ENCODE measurements at regions of chr9 and their contacts with region 1.

Region 1: GRCh38 chr9:135098400-135099105 is 11.1 kb downstream of the OLFM1 start:
- DNase-seq: no peak

Region 2: GRCh38 chr9:135178498-135178897 is 79.9 kb after region 1 on chr9:
- intact Hi-C with region 1: loop called in 1 of 2 experiments (anchors 5 kb)
- DNase-seq: no peak

Region 3: GRCh38 chr9:135410831-135411473 is 312.4 kb after region 1 on chr9:
- intact Hi-C with region 1: loop called in 1 of 2 experiments (anchors 5 kb)
- DNase-seq: peak; percentile 62

Measured in posterior vena cava (tissue), 2 donors.